Left lung (tissue), 14 donors: ENCODE measurements at regions of chr3 and their contacts with region 1.

Region 1: DNA sequence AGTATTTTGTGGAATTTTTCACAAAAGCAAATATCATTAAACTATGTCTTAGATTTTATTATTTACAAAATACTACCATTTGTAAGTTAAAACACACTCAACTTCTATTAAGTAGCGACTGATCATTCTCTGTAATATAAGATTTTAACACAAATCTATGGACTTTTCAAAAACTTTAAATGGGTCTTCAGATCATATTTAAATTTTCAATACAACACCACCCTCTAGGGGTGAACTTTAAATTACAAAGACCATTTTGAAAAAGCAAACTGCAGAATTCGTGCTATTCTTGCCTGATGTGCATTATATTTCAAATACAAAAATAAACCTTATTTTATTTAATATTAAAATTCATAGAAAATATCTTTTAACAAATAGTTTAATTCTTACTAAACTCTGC is 8.2 kb upstream of the VGLL4 start:
- DNase-seq: peak in 1 of 4 donors; percentile 55
- ATAC-seq: peak; percentile 40
- H3K4me3 ChIP-seq: no peak overlapping the region
- H3K27ac ChIP-seq: no peak overlapping the region
- H3K4me1 ChIP-seq: peaks cover 4 to 9% of the 10 kb centered on the region in 2 donors
- H3K27me3 ChIP-seq: no peaks in the 10 kb centered on the region
- CTCF ChIP-seq: peak; percentile 23 to 46

Region 2: GRCh38 chr3:11379233-11379823 is 272.6 kb before region 1 on chr3:
- intact Hi-C with region 1: loop called in 1 of 2 experiments (anchors 5 kb)
- DNase-seq: peak in 2 of 4 donors; percentile 75 to 76
- ATAC-seq: peak; percentile 80
- H3K4me3 ChIP-seq: no peak overlapping the region
- H3K27ac ChIP-seq: peak overlapping the region; percentile 31 to 58
- H3K4me1 ChIP-seq: peaks cover 0 to 4% of the 10 kb centered on the region in 2 donors
- H3K27me3 ChIP-seq: no peaks in the 10 kb centered on the region
- CTCF ChIP-seq: peak; percentile 34 to 44

Region 3: DNA sequence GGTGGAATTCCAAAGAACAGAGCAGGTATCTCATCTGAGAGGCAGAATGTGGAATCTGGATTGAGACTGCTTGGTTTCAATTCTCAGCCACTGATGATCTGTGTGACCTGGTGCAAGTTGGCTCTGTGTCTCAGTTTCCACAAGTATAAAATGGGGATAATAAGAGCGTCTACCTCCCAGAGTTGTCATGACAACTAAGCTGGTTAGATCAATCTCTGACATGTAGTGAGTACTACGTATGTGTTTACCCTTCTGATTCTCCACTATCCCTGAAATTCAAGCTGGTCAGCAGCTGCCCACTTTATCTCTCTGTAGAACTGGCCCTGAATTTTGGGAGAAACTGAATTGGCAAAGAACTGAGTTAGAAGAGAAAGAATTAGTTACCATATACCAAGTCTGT is 200.6 kb after region 1 on chr3:
- intact Hi-C with region 1: no loop called
- DNase-seq: no peak
- ATAC-seq: no peak
- H3K4me3 ChIP-seq: no peak overlapping the region
- H3K27ac ChIP-seq: no peak overlapping the region
- H3K4me1 ChIP-seq: no peaks in the 10 kb centered on the region
- H3K27me3 ChIP-seq: peaks cover 0 to 15% of the 10 kb centered on the region in 2 donors
- CTCF ChIP-seq: no peak